ENCODE measurements at regions of chr10 and their contacts with region 1.

Region 1: DNA sequence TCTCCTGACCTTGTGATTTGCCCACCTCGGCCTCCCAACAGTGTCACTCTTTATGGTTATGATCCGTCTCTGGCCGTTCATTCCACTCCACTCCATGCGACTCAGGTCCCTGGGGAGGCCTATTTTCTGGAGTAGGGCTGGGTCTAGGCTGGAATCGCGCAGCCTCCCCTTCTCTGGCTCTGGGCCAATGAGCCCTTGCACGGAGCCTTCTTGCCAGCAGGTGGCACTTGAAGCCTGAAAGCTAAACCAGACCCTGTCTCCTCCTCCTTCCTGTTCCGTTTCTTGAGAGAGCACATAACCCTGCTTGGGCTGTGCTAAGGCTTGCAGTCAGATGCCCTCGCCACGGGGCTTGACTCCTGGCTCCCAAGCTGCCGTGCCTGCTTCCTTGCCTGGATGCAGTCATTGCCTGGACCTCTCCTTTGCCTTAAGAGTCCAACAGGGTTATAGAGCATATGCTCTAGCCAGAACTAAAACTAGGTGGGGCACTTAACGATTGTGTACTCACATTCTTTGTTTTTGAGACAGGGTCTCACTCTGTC is 9.6 kb upstream of the DNAJB12 start:
- DNase-seq: peak; percentile 83 to 92 (median 86)
- ATAC-seq: peak; percentile 99
- H3K4me3 ChIP-seq: no peak overlapping the region
- H3K27ac ChIP-seq: peak overlapping the region in 1 of 2 donors; percentile 18
- H3K4me1 ChIP-seq: peaks cover 0 to 17% of the 10 kb centered on the region in 2 donors
- H3K27me3 ChIP-seq: no peaks in the 10 kb centered on the region
- CTCF ChIP-seq: peak; percentile 83 to 93

Region 2: DNA sequence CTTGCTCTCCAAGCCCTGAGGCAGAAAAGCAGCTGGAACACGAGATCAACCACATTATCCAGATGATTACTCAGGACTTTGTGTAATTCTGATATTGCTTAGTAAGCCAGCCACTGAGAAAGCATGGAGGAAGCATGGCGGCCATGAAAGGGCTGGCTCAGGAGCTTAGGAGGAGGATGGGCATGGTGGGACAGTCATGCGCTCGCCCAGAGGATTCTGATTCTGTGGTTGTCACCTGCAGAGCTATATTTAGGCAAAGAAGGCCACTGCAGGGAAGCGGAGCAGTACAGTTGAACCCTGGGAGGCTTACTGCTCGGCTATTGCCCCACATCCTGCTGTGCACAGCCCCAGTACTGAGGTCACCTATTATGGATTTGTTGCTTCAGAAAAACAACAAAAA is 119.2 kb after region 1 on chr10:
- intact Hi-C with region 1: no loop called
- DNase-seq: no peak
- ATAC-seq: peak; percentile 22
- H3K4me3 ChIP-seq: no peak overlapping the region
- H3K27ac ChIP-seq: peak overlapping the region in 1 of 2 donors; percentile 65
- H3K4me1 ChIP-seq: no peaks in the 10 kb centered on the region
- H3K27me3 ChIP-seq: no peaks in the 10 kb centered on the region
- CTCF ChIP-seq: no peak

Region 3: DNA sequence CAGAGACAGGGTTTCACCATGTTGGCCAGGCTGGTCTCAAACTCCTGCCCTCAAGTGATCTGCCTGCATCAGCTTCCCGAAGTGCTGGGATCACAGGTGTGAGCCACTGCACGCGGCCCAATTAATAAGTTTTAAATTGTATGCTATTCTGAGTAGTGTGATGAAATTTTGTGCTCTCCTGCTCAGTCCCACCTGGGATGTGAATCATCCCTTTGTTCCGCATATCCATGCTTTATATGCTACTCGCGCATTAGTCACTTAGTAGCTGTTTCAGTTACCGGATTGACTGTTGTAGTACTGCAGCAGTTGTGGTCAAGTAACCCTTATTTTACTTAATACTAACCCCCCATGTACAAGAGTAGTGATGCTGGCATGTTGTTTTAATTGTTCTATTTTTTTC is 481.9 kb after region 1 on chr10:
- intact Hi-C with region 1: loop called in 1 of 2 experiments (anchors 10 kb)
- DNase-seq: no peak
- ATAC-seq: no peak
- H3K4me3 ChIP-seq: no peak overlapping the region
- H3K27ac ChIP-seq: no peak overlapping the region
- H3K4me1 ChIP-seq: no peaks in the 10 kb centered on the region
- H3K27me3 ChIP-seq: no peaks in the 10 kb centered on the region
- CTCF ChIP-seq: no peak

Region 4: GRCh38 chr10:72875250-72876055 is 511.1 kb after region 1 on chr10:
- intact Hi-C with region 1: loop called in 1 of 2 experiments (anchors 10 kb)
- DNase-seq: peak in 1 of 4 donors; percentile 20
- ATAC-seq: peak; percentile 78
- H3K4me3 ChIP-seq: no peak overlapping the region
- H3K27ac ChIP-seq: no peak overlapping the region
- H3K4me1 ChIP-seq: no peaks in the 10 kb centered on the region
- H3K27me3 ChIP-seq: no peaks in the 10 kb centered on the region
- CTCF ChIP-seq: peak in 1 of 2 donors; percentile 39

Measured in left lung (tissue), 14 donors.